Calu3 (cell line): ENCODE measurements at regions of chr15 and their contacts with region 1.

Region 1: DNA sequence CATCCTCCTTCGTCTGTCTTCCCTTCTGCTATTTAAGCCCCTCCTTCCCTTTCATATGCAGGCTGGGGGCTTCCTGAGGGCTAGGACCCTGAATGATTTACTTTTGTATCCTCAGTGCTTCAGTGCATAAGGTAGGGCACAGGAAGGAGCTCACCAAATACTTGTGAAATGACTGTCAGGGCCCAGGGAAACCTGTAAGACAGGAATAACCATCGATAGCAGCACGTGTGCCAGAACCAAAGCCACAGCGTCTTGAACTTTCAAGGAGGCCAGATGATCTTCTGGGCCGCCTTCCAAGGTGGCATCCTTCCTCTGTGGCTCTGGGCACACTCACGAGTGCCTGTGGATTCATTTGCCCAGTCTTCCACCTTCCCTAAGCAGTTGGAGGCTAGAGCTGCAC is 3.9 kb downstream of the TMED3 start:
- DNase-seq: peak; percentile 77
- H3K4me3 Mint-ChIP-seq: peak overlapping the region; percentile 34
- H3K27ac Mint-ChIP-seq: peak overlapping the region; percentile 86
- H3K4me1 Mint-ChIP-seq: peaks cover 56% of the 10 kb centered on the region
- H3K27me3 Mint-ChIP-seq: peaks cover 7% of the 10 kb centered on the region
- CTCF ChIP-seq: no peak

Region 2: DNA sequence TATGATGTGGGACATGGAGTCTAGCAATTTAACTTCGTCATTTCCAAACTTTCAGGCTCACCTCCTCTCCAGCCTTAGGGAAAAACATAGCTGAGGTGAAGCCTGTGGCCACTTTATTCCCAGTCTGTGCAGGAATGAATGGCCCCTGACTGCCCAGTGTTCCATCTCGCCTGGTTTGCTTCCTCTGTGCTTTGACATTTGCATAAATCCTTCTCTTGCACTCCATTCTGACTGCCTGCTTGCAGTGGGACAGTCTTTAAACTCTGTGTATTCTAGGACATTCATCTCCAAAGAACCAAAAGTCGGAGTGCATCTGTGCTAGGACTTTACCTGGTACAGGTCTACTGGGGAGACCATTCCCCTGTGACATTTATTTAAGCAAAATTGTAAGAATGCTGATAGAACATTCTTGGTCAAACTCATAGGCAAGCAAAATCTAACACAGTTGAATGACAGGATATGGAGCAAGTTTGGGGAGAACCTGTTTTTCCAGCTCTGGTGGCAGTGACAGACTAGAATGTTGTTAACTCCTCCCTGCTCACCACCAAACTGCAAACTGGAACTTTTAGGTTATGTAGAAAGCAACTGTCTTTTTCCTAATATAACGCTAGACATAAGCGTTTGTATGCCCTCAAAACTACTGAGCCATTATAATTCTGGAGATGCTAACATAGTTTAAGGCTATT is 18.2 kb after region 1 on chr15:
- CTCF ChIA-PET with region 1: interaction called, 3 read pairs
- intact Hi-C with region 1: loop called (anchors 1 kb)
- DNase-seq: peak; percentile 73
- H3K4me3 Mint-ChIP-seq: peak overlapping the region; percentile 33
- H3K27ac Mint-ChIP-seq: peak overlapping the region; percentile 57
- H3K4me1 Mint-ChIP-seq: peaks cover 28% of the 10 kb centered on the region
- H3K27me3 Mint-ChIP-seq: no peaks in the 10 kb centered on the region
- CTCF ChIP-seq: no peak

Region 3: DNA sequence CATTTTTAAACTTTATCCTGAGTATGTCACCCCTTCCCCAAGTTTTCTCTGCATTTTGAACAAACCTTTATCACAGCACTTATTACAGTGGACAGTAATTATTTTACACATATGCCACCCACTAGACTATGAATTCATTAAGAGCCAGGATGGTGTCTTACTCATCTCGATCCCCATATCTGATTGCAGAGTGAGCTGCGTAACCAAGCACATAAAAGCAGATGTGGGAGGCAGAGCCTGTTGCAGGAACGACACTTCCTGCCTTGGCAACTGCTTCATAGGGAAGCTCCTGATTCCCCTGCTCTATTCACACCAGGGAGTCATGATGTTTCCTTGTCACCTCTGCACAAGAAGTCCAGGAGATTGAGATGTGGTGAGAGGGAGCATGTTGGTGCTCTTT is 208.5 kb after region 1 on chr15:
- CTCF ChIA-PET with region 1: no interaction called
- intact Hi-C with region 1: no loop called
- DNase-seq: no peak
- H3K4me3 Mint-ChIP-seq: no peak overlapping the region
- H3K27ac Mint-ChIP-seq: no peak overlapping the region
- H3K4me1 Mint-ChIP-seq: no peaks in the 10 kb centered on the region
- H3K27me3 Mint-ChIP-seq: peaks cover 39% of the 10 kb centered on the region
- CTCF ChIP-seq: no peak